Mammary epithelial cell (primary cell): ENCODE measurements at regions of chr12 and their contacts with region 1.

Region 1: GRCh38 chr12:57005980-57006808 is at the start of gene ZBTB39:
- DNase-seq: peak; percentile 42
- H3K4me3 ChIP-seq: peak within 1 kb of the TSS; percentile 72 to 76 (median 73)
- H3K27ac ChIP-seq: no peak within 1 kb of the TSS
- H3K4me1 ChIP-seq: peaks cover 5% of the 10 kb centered on the region
- H3K27me3 ChIP-seq: no peaks in the 10 kb centered on the region
- CTCF ChIP-seq: peak; percentile 8 to 54
- total RNA-seq, gene ZBTB39: 5.7 to 8.0 TPM

Region 2: GRCh38 chr12:56763753-56764657 is 242.2 kb before region 1 on chr12:
- CTCF ChIA-PET with region 1: interaction called, 5 read pairs
- dilution Hi-C with region 1: no loop called
- in situ Hi-C with region 1: loop called in 1 of 2 experiments (anchors 5 kb)
- intact Hi-C with region 1: loop called (anchors 1 kb)
- DNase-seq: no peak
- H3K4me3 ChIP-seq: no peak overlapping the region
- H3K27ac ChIP-seq: no peak overlapping the region
- H3K4me1 ChIP-seq: no peaks in the 10 kb centered on the region
- H3K27me3 ChIP-seq: no peaks in the 10 kb centered on the region
- CTCF ChIP-seq: no peak

Region 3: DNA sequence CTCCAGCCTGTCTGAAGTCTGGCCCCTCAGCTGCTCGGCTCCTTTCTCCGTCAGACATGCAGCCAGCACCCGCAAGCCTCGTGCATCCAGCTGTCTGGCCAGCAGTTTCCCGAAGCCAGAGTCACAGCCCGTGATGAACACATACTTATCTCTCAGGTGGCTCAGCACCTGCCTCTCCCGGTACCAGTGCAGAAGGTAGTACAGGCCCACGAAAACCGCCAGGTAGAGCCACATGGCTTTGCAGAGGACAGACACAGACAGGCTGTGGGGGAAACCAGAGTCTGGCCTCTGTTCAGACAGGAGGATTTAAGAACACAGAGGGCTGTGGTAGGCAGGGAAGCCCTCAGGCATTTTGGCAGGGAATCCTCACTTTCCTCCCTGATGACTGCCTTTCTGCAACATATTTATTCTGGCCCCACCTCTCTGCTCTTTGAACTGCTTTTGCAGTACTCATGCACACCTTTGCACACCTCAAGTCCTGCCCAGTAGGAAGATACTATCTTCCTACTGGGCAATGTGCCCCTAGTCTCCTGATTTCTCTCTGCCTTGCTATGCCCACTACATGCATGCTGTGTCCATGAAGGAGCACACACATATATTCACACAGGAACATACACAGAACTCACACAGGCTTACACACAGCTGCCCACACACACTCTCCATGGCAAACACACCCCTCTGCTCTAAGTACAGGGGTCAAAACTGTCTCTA is 48.8 kb before region 1 on chr12 and contains the start of gene RDH16:
- CTCF ChIA-PET with region 1: no interaction called
- dilution Hi-C with region 1: no loop called
- in situ Hi-C with region 1: no loop called
- intact Hi-C with region 1: no loop called
- DNase-seq: peak; percentile 86
- H3K4me3 ChIP-seq: no peak within 1 kb of the TSS
- H3K27ac ChIP-seq: no peak within 1 kb of the TSS
- H3K4me1 ChIP-seq: peaks cover 18% of the 10 kb centered on the region
- H3K27me3 ChIP-seq: no peaks in the 10 kb centered on the region
- CTCF ChIP-seq: peak in 1 of 2 donors; percentile 5
- total RNA-seq, gene RDH16: 0.16 TPM in 1 of 2 donors, not detected in the other

Region 4: DNA sequence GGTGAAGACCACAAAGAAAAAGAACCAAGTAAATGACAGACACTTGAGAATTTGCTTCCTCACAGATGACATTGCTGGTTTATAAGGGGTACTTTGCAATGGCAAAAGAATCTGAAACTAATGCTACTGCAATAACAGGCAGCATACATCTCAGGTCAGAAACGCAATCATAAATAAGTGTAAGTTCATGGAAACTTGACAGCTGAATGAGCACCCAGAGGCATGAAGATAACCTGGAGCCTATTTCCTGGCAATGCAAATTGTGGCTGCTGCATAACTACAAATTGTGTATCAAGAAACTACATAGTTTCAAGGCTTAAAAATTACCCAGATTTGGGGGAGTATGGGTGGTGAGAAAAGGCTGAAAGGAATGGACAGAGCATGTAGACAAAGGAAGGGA is 52.3 kb after region 1 on chr12:
- CTCF ChIA-PET with region 1: no interaction called
- dilution Hi-C with region 1: loop called (anchors 5 kb)
- in situ Hi-C with region 1: loop called in 1 of 2 experiments (anchors 10 kb)
- intact Hi-C with region 1: loop called (anchors 1 kb)
- DNase-seq: no peak
- H3K4me3 ChIP-seq: no peak overlapping the region
- H3K27ac ChIP-seq: no peak overlapping the region
- H3K4me1 ChIP-seq: no peaks in the 10 kb centered on the region
- H3K27me3 ChIP-seq: no peaks in the 10 kb centered on the region
- CTCF ChIP-seq: no peak

Region 5: DNA sequence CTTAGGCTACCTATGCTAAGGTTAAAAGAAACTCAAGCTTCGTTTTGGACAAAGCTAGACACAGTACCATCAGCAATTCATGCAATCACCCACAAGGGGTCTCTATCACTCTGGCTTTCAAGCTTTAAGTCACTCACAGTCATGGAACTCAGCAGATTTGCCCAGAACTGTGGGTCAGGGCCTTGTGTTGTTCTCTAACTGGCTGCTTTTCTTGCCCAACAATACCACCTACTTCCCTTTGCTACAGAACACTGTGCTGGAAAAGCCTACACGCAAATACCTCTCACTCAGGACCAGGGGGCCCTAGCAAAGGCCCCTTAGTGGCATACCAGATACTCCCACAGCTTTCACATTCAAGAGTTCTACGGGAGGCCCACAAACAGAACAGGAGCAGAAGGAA is 63.3 kb after region 1 on chr12:
- CTCF ChIA-PET with region 1: no interaction called
- dilution Hi-C with region 1: no loop called
- in situ Hi-C with region 1: loop called in 1 of 2 experiments (anchors 10 kb)
- intact Hi-C with region 1: no loop called
- DNase-seq: peak; percentile 63
- H3K4me3 ChIP-seq: no peak overlapping the region
- H3K27ac ChIP-seq: no peak overlapping the region
- H3K4me1 ChIP-seq: peaks cover 9% of the 10 kb centered on the region
- H3K27me3 ChIP-seq: no peaks in the 10 kb centered on the region
- CTCF ChIP-seq: peak; percentile 83 to 90

Region 6: GRCh38 chr12:57111031-57111734 is 105.0 kb after region 1 on chr12 and contains the start of gene STAT6:
- CTCF ChIA-PET with region 1: interaction called, 3 read pairs
- dilution Hi-C with region 1: no loop called
- in situ Hi-C with region 1: no loop called
- intact Hi-C with region 1: loop called (anchors 1 kb)
- DNase-seq: peak; percentile 82
- H3K4me3 ChIP-seq: peak within 1 kb of the TSS; percentile 62 to 68 (median 67)
- H3K27ac ChIP-seq: peak within 1 kb of the TSS; percentile 95
- H3K4me1 ChIP-seq: peaks cover 31% of the 10 kb centered on the region
- H3K27me3 ChIP-seq: no peaks in the 10 kb centered on the region
- CTCF ChIP-seq: no peak
- total RNA-seq, gene STAT6: 65.3 to 150 TPM

Region 7: GRCh38 chr12:57135527-57136326 is 129.5 kb after region 1 on chr12:
- CTCF ChIA-PET with region 1: no interaction called
- dilution Hi-C with region 1: no loop called
- in situ Hi-C with region 1: no loop called
- intact Hi-C with region 1: no loop called
- DNase-seq: no peak
- H3K4me3 ChIP-seq: no peak overlapping the region
- H3K27ac ChIP-seq: no peak overlapping the region
- H3K4me1 ChIP-seq: no peaks in the 10 kb centered on the region
- H3K27me3 ChIP-seq: no peaks in the 10 kb centered on the region
- CTCF ChIP-seq: no peak

Region 8: GRCh38 chr12:57182921-57183790 is 177.0 kb after region 1 on chr12:
- CTCF ChIA-PET with region 1: no interaction called
- dilution Hi-C with region 1: no loop called
- in situ Hi-C with region 1: loop called in 1 of 2 experiments (anchors 10 kb)
- intact Hi-C with region 1: loop called (anchors 2 kb)
- DNase-seq: peak; percentile 79
- H3K4me3 ChIP-seq: no peak overlapping the region
- H3K27ac ChIP-seq: no peak overlapping the region
- H3K4me1 ChIP-seq: peaks cover 22% of the 10 kb centered on the region
- H3K27me3 ChIP-seq: no peaks in the 10 kb centered on the region
- CTCF ChIP-seq: peak; percentile 91 to 96

Region 9: GRCh38 chr12:57632694-57633477 is 626.7 kb after region 1 on chr12 and contains the start of gene B4GALNT1:
- CTCF ChIA-PET with region 1: no interaction called
- dilution Hi-C with region 1: no loop called
- in situ Hi-C with region 1: no loop called
- intact Hi-C with region 1: no loop called
- DNase-seq: peak; percentile 47
- H3K4me3 ChIP-seq: peak within 1 kb of the TSS; percentile 61 to 69 (median 66)
- H3K27ac ChIP-seq: no peak within 1 kb of the TSS
- H3K4me1 ChIP-seq: peaks cover 20% of the 10 kb centered on the region
- H3K27me3 ChIP-seq: peaks cover 2% of the 10 kb centered on the region
- CTCF ChIP-seq: peak; percentile 66 to 83
- total RNA-seq, gene B4GALNT1: 8.0 to 13.4 TPM